ENCODE measurements at regions of chr16 and their contacts with region 1.

Region 1: DNA sequence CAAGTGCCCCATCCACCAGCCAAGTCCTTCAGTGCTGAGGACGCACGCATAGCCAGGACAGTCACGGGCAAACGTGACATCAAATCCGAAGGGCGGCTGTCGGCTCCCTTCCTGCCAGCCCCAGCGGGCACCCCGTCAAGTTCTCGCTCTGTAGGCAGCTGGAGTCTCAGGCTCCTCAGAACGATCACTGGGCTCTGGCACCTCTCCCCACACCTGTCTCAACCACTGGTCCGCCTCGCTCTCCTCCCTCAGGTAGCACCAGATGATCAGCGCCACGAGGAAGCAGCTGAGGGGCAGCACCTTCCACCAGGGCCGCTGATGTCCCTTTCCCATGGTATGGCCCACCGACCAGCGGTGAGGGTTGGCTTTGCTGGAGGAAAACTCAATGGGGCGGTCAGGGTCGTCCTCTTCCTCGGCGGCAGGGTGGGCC is 421 bp downstream of the UQCC4 start:
- DNase-seq: no peak
- H3K4me3 ChIP-seq: peak overlapping the region; percentile 91
- H3K4me3 Mint-ChIP-seq: peak overlapping the region; percentile 90 to 97 (median 94)
- H3K27ac ChIP-seq: peak overlapping the region; percentile 93
- H3K27ac Mint-ChIP-seq: peak overlapping the region; percentile 72 to 100 (median 97)
- H3K4me1 ChIP-seq: peaks cover 11% of the 10 kb centered on the region
- H3K4me1 Mint-ChIP-seq: peaks cover 17 to 26% (median 19%) of the 10 kb centered on the region in 3 donors
- H3K27me3 ChIP-seq: no peaks in the 10 kb centered on the region
- H3K27me3 Mint-ChIP-seq: peaks cover 0 to 3% of the 10 kb centered on the region in 2 donors

Region 2: DNA sequence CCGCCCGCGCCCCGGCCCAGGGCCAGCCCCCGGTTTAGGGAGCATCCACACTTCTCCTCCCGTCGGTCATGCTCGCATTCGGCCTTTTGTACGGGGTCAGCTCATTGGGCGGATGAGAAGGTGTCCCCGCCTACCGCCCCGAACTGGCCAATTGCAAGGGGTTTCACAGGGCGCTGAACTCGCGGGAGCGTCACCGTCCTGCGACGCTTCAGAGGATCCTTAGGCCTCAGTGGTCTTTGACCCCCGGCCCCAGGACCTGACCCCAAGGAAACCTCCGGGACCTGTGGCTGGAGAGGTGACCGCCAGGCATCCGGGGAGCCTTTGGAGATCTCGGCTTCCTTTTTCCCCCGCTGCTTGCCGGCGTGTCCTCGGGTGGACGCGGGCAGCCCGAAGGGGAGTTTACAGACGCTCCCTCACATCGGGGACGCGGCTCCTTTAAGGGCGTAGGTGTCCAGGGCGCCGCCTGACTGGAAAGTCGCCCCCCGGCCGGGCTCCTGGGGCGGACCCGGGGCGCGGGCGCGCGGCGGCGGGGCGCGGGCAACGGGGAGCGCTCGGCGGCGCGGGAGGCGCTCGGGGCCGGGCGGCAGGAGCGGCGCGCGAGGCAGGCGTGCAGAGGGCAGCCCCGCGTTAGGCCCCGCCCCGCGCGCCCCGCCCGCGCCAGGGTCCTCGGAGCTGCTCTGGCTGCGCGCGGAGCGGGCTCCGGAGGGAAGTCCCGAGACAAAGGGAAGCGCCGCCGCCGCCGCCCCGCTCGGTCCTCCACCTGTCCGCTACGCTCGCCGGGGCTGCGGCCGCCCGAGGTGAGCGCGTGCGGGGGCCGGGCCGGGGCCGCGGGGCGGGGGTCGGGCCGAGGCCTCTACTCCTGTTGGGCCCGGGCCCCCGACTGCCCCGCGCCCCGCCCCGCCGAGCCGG is 110.9 kb before region 1 on chr16 and contains the start of gene UBE2I:
- CTCF ChIA-PET with region 1: no interaction called
- POLR2A ChIA-PET with region 1: interaction called, 11 read pairs
- DNase-seq: peak; percentile 93 to 100 (median 98)
- H3K4me3 ChIP-seq: peak within 1 kb of the TSS; percentile 84
- H3K4me3 Mint-ChIP-seq: peak within 1 kb of the TSS; percentile 95 to 99 (median 96)
- H3K27ac ChIP-seq: peak within 1 kb of the TSS; percentile 100
- H3K27ac Mint-ChIP-seq: peak within 1 kb of the TSS; percentile 91 to 100 (median 99)
- H3K4me1 ChIP-seq: peaks cover 39% of the 10 kb centered on the region
- H3K4me1 Mint-ChIP-seq: peaks cover 28 to 57% (median 30%) of the 10 kb centered on the region in 3 donors
- H3K27me3 ChIP-seq: no peaks in the 10 kb centered on the region
- H3K27me3 Mint-ChIP-seq: no peaks in the 10 kb centered on the region
- total RNA-seq, gene UBE2I: 238 to 257 TPM

Region 3: DNA sequence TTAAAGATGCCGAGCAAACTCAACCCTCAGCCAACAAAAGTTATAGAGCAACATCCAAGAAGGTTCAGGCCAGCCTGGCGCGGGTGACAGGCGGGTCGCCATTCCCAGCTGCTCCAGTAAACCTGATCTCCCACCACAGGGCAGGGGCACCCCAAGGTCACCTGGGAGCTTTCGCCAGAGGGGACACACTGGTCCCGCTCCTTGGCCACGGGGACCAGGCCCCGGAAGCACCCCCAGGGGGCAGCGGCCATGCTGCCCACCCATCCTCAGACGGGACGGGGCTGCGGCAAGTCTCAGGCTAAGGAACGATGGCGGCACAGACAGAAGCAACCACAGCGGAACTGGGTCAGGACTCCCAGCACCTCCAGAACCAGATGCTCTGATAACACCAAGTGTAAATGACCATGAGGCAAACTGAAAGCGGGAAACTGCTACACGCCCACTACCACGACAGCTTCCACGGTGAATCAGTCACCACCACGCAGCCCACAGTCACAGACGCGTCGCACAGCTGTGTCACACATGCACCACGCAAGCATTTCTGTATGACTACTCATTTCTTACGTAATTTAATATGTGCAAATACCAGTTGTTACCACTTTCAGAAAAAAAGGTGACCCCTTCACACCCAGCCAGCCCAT is 38.3 kb after region 1 on chr16:
- CTCF ChIA-PET with region 1: no interaction called
- POLR2A ChIA-PET with region 1: no interaction called
- DNase-seq: no peak
- H3K4me3 ChIP-seq: no peak overlapping the region
- H3K4me3 Mint-ChIP-seq: no peak overlapping the region
- H3K27ac ChIP-seq: no peak overlapping the region
- H3K27ac Mint-ChIP-seq: peak overlapping the region in 2 of 8 donors; percentile 68 to 76
- H3K4me1 ChIP-seq: no peaks in the 10 kb centered on the region
- H3K4me1 Mint-ChIP-seq: peaks cover 0 to 12% (median 4%) of the 10 kb centered on the region in 3 donors
- H3K27me3 ChIP-seq: no peaks in the 10 kb centered on the region
- H3K27me3 Mint-ChIP-seq: no peaks in the 10 kb centered on the region

Region 4: GRCh38 chr16:1782352-1783091 is 362.4 kb after region 1 on chr16 and contains the starts of genes NUBP2 and SPSB3:
- CTCF ChIA-PET with region 1: interaction called, 3 read pairs
- POLR2A ChIA-PET with region 1: interaction called, 12 read pairs
- DNase-seq: peak; percentile 98 to 99 (median 98)
- H3K4me3 ChIP-seq: peak within 1 kb of the TSS; percentile 82
- H3K4me3 Mint-ChIP-seq: peak within 1 kb of the TSS; percentile 89 to 96 (median 92)
- H3K27ac ChIP-seq: peak within 1 kb of the TSS; percentile 86
- H3K27ac Mint-ChIP-seq: peak within 1 kb of the TSS; percentile 87 to 97 (median 92)
- H3K4me1 ChIP-seq: peaks cover 35% of the 10 kb centered on the region
- H3K4me1 Mint-ChIP-seq: peaks cover 18 to 53% (median 26%) of the 10 kb centered on the region in 3 donors
- H3K27me3 ChIP-seq: no peaks in the 10 kb centered on the region
- H3K27me3 Mint-ChIP-seq: peaks cover 0 to 2% of the 10 kb centered on the region in 2 donors
- total RNA-seq, gene NUBP2: 73.9 to 82.8 TPM
- total RNA-seq, gene SPSB3: 30.6 to 31.5 TPM